Naive thymus-derived CD4-positive, alpha-beta T cell (primary cell): ENCODE measurements at regions of chr1 and their contacts with region 1.

Region 1: DNA sequence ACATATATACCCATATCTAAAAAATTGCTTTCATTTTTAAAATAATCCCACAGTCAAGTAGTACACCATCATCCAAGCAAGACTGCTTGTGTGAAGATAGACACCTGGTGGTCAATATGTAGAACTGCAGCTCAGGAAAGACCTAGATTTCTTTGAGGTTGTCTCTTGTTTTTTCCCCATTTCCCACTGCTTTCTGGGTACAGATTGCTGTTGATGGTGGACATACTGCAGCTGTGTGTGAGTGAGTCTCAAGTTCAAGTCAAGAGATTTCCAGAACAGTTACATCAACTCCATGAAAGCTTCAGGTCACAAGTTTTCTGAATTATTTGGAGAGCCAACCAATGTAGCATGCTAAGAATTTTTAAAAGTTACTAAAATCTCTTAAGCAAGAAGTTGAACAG is 306.4 kb downstream of the DUSP10 start:
- DNase-seq: peak in 6 of 9 donors; percentile 2 to 47 (median 26)
- ATAC-seq: peak; percentile 74
- H3K4me3 ChIP-seq: no peak overlapping the region
- H3K4me3 Mint-ChIP-seq: no peak overlapping the region
- H3K27ac ChIP-seq: no peak overlapping the region
- H3K27ac Mint-ChIP-seq: no peak overlapping the region
- H3K4me1 ChIP-seq: no peaks in the 10 kb centered on the region
- H3K4me1 Mint-ChIP-seq: peaks cover 0 to 27% (median 7%) of the 10 kb centered on the region in 7 donors
- H3K27me3 ChIP-seq: no peaks in the 10 kb centered on the region
- H3K27me3 Mint-ChIP-seq: peaks cover 2 to 22% (median 17%) of the 10 kb centered on the region in 5 donors

Region 2: GRCh38 chr1:220810179-220810653 is 625.3 kb before region 1 on chr1:
- CTCF ChIA-PET with region 1: no interaction called
- POLR2A ChIA-PET with region 1: no interaction called
- intact Hi-C with region 1: loop called in 1 of 2 experiments (anchors 1 kb)
- DNase-seq: peak; percentile 48 to 71 (median 59)
- ATAC-seq: peak; percentile 97
- H3K4me3 ChIP-seq: no peak overlapping the region
- H3K4me3 Mint-ChIP-seq: peak overlapping the region; percentile 33 to 86 (median 75)
- H3K27ac ChIP-seq: no peak overlapping the region
- H3K27ac Mint-ChIP-seq: peak overlapping the region in 1 of 9 donors; percentile 25
- H3K4me1 ChIP-seq: no peaks in the 10 kb centered on the region
- H3K4me1 Mint-ChIP-seq: peaks cover 0 to 9% (median 7%) of the 10 kb centered on the region in 7 donors
- H3K27me3 ChIP-seq: no peaks in the 10 kb centered on the region
- H3K27me3 Mint-ChIP-seq: peaks cover 5 to 33% (median 26%) of the 10 kb centered on the region in 5 donors

Region 3: DNA sequence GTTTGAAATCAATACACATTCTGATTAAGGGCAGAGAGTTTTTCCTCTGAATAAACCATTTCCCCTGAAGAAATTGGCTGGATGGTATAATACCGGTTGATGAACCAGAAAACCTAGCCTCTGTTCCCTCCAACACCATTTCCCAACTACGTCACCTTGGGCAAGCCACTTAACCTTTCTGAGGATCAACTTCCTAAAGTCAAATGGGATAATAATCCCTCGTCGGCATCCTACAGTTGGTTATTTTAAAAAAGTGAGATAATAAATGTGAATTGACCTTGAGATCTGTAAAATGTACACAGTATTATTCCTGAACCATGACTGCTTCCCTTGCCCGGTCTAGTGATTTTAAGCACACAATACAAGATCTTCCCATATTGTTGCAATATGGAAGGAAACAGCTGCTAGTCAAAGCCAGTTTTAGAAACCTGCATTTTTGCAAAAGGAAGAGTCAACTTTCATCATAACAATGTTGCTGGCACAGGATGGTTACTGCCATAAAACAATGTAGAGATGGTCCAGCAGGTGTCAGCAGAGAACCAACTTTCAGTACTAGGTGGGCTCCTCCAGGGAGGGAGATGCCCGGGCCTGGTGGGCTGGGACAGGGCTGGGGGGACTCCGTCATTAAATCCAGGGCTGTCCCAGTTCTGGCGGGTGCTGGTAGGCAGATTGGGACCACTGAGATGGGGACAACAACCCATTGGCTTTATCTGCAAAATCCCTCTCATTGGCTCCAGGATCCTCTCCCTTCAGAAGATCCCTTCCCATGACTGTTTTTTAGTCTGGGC is 561.4 kb before region 1 on chr1:
- CTCF ChIA-PET with region 1: no interaction called
- POLR2A ChIA-PET with region 1: no interaction called
- intact Hi-C with region 1: loop called in 1 of 2 experiments (anchors 2 kb)
- DNase-seq: no peak
- ATAC-seq: no peak
- H3K4me3 ChIP-seq: no peak overlapping the region
- H3K4me3 Mint-ChIP-seq: no peak overlapping the region
- H3K27ac ChIP-seq: no peak overlapping the region
- H3K27ac Mint-ChIP-seq: no peak overlapping the region
- H3K4me1 ChIP-seq: no peaks in the 10 kb centered on the region
- H3K4me1 Mint-ChIP-seq: peaks cover 7 to 23% (median 22%) of the 10 kb centered on the region in 7 donors
- H3K27me3 ChIP-seq: peaks cover 0 to 8% of the 10 kb centered on the region in 2 donors
- H3K27me3 Mint-ChIP-seq: peaks cover 55 to 85% (median 73%) of the 10 kb centered on the region in 5 donors

Region 4: GRCh38 chr1:221263831-221264767 is 171.4 kb before region 1 on chr1:
- CTCF ChIA-PET with region 1: no interaction called
- POLR2A ChIA-PET with region 1: no interaction called
- intact Hi-C with region 1: loop called in 1 of 2 experiments (anchors 1 kb)
- DNase-seq: peak in 3 of 9 donors; percentile 1 to 19 (median 4)
- ATAC-seq: no peak
- H3K4me3 ChIP-seq: no peak overlapping the region
- H3K4me3 Mint-ChIP-seq: no peak overlapping the region
- H3K27ac ChIP-seq: no peak overlapping the region
- H3K27ac Mint-ChIP-seq: no peak overlapping the region
- H3K4me1 ChIP-seq: no peaks in the 10 kb centered on the region
- H3K4me1 Mint-ChIP-seq: no peaks in the 10 kb centered on the region
- H3K27me3 ChIP-seq: no peaks in the 10 kb centered on the region
- H3K27me3 Mint-ChIP-seq: peaks cover 0 to 6% (median 5%) of the 10 kb centered on the region in 5 donors